ENCODE measurements at regions of chr5 and their contacts with region 1.

Region 1: DNA sequence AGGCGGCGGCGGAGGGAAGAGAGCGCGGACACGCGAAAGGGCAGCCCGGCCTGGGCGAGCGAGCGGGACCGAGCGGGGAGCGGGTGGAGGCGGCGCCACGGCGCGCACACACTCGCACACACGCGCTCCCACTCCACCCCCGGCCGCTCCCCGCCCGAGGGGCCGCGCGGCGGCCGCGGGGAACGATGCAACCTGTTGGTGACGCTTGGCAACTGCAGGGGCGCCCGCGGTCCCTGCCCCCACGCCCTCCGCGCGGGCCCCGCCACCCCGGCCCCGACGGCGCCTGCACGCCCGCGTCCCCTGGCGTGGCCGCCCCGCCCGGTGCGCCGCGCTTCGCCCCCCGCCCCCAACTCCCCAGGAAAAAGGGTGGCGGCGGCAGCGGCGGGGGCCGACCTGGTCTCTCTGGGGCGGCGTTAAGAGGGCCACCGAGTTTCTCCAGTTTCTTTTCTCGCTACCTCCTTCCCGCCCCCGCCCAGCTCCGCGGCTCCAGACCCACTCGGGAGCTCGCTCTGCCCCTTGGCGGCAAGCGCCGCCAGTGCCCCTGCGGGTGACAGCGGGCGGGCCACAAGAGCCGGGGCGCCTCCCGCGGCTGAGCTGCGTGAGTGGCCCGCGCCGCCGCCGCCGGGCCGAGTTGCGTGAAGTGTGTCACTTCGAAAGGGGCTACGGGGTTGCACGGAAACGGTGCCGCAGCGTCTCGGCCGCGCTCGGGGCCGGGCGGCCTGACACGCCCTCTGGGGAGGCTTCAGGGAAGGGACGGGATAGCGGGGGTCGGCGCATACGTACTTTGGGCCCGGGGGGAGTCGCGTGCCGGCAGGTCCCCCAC is at the start of gene NR3C1:
- DNase-seq: peak; percentile 95
- ATAC-seq: peak; percentile 88
- total RNA-seq, gene NR3C1: 56.1 TPM

Region 2: GRCh38 chr5:142922223-142922952 is 481.4 kb before region 1 on chr5:
- intact Hi-C with region 1: loop called (anchors 5 kb)
- DNase-seq: no peak
- ATAC-seq: peak; percentile 65

Region 3: DNA sequence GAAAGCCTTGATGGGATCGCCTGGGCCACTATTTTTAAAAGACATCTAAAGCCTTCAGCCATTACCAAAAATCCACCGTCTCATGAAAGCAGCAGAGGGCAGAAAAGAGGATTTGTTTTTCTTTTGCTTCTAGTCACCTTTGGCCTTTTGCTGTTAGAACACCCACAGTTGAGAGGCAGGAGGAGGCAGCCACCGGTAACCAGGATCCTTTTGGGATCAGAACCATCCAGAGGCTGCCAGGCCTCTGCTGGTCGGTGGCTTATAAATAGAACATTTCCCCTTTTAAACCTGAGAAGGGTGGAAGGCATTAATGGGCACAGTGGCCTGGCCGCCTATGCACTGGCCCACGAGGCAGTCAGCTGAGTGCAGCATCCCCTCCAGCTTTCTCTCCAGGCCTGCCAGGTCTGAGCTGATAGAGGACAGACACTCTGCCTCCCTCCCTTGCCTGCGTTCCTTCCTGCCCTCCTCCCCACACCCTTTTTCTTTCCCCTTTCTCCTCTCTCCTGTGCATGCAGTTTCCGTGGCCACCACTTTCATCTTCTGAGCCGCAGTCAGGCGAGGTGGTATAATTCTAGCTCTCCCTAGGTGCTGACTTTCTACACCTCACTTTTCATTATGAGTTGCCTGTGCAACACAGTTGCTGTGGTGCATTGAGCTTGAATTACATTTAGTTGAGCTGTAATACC is 380.2 kb before region 1 on chr5:
- intact Hi-C with region 1: loop called (anchors 5 kb)
- DNase-seq: peak; percentile 80
- ATAC-seq: peak; percentile 94

Region 4: GRCh38 chr5:143106174-143106573 is 297.6 kb before region 1 on chr5:
- intact Hi-C with region 1: loop called (anchors 1 kb)
- DNase-seq: no peak
- ATAC-seq: peak; percentile 56

Region 5: GRCh38 chr5:143200781-143201398 is 202.9 kb before region 1 on chr5:
- intact Hi-C with region 1: loop called (anchors 2 kb)
- DNase-seq: no peak
- ATAC-seq: peak; percentile 97

Region 6: GRCh38 chr5:143495821-143496275 is 92.0 kb after region 1 on chr5:
- intact Hi-C with region 1: loop called (anchors 5 kb)
- DNase-seq: no peak
- ATAC-seq: peak; percentile 71

Region 7: DNA sequence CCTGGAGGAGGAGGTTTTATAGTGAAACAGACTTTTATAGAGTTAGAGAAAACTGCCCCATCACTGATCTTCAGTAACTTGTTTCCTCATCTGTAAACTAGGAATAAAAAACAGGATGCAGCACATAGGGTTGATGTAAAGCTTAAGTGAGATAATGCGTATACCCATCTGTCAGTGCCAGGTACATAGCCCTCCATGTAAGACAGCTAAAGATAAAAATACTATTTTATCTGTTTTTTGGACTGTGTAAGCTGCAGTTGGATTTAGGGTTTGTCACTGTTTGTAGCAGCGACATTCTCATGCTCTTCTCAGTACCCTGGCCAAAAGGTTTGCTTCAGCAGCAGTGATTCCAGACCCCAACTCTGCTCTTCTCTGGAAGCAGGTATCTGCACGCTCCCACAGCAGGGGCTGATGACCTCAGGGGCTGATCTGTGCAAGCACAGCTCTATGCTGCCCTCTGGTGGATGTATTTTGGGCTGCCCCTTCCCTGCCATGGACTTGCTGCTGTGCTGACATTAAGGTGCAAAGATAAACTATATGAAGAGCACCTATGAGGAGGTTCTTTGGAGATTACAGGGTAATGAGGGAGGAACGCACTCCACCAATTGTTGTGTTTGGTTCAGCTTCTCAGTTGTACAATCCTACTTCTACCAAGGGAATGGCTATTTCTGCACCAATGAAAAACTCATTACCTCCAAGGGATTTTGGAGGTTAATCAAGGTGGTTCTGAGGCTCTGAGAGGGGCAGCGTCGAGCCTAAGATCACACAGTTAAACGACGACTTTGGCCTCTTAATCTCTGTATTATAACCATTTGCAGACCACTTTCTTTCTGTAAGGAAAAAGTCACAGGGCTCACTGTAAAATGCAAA is 421.3 kb after region 1 on chr5:
- intact Hi-C with region 1: loop called (anchors 2 kb)
- DNase-seq: peak; percentile 76
- ATAC-seq: peak; percentile 93

Measured in Right ventricle myocardium inferior (tissue), 1 donor.